ENCODE measurements at regions of chr4 and their contacts with region 1.

Region 1: GRCh38 chr4:54217642-54218495 is 11.2 kb upstream of the PDGFRA start:
- DNase-seq: peak; percentile 53 to 83 (median 65)
- ATAC-seq: peak; percentile 90
- H3K4me3 ChIP-seq: no peak overlapping the region
- H3K4me1 ChIP-seq: peaks cover 6% of the 10 kb centered on the region
- CTCF ChIP-seq: peak; percentile 79

Region 2: GRCh38 chr4:53551958-53552357 is 665.9 kb before region 1 on chr4:
- intact Hi-C with region 1: no loop called
- DNase-seq: no peak
- ATAC-seq: no peak
- H3K4me3 ChIP-seq: no peak overlapping the region
- H3K4me1 ChIP-seq: no peaks in the 10 kb centered on the region
- CTCF ChIP-seq: no peak

Region 3: DNA sequence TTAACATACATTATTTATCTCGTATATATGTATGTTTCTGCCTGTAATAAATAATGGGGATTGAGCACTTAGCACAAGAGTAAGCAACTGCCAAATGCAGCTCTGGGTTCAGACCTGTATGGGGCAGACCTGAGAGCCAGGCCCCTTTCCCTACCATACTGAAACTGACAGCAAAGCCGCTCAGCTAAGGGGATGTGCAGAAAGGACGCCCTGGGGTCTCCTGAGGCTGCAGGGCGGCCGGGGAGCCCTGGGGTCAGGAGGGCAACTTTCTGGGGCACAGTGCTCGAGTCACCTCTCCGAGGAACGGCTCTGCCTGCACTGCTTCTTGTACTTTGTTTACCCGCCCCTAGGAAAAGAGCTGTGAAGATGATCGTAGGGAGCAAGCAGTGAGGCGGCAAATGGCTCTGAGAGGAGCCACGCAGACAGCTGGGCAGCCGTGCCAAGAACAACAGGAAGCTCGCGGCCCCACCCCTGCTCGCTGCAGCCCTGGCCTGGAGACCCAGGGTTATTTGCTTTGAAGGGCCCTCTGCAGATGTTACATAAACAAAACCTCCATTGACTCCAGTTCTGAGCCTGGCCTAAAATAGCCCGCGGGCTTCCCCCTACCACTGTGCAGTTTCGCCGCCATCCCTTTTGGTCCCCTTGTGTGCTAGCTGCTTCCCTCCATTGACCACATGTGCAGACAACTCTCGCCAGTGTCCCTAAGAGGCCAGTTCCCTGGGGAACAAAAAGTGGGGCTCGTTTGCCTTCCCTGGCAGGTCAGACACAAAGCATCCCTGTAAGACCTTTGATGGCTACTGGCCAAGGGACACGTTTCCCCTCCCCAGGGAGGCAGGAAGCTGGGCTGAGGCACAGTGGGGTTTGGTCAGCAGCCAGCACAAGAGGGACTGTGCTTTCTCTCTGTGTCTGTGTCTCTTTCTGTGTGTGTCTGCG is 515.3 kb before region 1 on chr4:
- intact Hi-C with region 1: loop called in 1 of 2 experiments (anchors 10 kb)
- DNase-seq: peak; percentile 84 to 85 (median 84)
- ATAC-seq: peak; percentile 92
- H3K4me3 ChIP-seq: no peak overlapping the region
- H3K4me1 ChIP-seq: peaks cover 13% of the 10 kb centered on the region
- CTCF ChIP-seq: no peak

Region 4: DNA sequence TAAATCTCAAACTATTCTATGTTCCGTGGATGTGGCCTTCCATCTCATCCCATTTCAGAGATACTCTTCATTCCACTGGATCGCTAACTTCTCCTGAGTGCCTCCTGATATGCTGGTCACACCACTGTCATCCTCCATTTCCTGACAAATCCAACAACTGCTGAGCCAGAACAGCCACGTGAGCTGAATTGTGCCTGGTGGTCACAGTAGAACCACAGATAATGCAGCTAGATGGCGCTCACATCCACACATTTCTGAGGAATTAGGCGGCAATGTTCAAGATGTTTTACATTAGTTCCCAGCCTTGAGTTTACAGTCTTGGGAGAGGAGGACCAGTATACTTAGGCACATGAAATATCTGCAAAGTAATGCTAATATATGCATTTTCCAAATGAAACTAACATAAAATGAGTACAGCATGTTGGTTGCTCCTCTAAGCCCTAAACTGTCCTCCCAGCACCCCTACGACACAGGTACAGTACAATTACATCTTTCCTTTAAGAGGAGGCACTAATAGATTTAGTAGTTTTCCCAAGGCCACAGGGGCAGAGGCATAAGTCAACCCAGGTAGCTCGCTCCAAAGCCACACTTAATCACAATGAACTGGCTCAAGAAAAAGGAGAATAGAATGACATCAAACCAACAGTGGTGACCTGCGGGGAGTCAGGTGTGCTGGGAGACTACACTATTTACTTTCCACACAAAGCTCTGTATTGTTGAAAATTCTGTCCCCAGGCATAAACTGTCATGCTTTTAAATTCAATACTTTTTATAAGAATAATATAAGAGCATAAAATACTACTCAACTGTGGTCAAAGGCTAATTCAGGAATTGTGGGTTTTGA is 287.7 kb before region 1 on chr4:
- intact Hi-C with region 1: loop called in 1 of 2 experiments (anchors 5 kb)
- DNase-seq: peak in 2 of 3 donors; percentile 36 to 93
- ATAC-seq: peak; percentile 84
- H3K4me3 ChIP-seq: no peak overlapping the region
- H3K4me1 ChIP-seq: no peaks in the 10 kb centered on the region
- CTCF ChIP-seq: peak; percentile 17

Region 5: GRCh38 chr4:54082168-54082567 is 135.7 kb before region 1 on chr4:
- intact Hi-C with region 1: no loop called
- DNase-seq: peak in 2 of 3 donors; percentile 27 to 49
- ATAC-seq: peak; percentile 95
- H3K4me3 ChIP-seq: no peak overlapping the region
- H3K4me1 ChIP-seq: no peaks in the 10 kb centered on the region
- CTCF ChIP-seq: no peak

Region 6: DNA sequence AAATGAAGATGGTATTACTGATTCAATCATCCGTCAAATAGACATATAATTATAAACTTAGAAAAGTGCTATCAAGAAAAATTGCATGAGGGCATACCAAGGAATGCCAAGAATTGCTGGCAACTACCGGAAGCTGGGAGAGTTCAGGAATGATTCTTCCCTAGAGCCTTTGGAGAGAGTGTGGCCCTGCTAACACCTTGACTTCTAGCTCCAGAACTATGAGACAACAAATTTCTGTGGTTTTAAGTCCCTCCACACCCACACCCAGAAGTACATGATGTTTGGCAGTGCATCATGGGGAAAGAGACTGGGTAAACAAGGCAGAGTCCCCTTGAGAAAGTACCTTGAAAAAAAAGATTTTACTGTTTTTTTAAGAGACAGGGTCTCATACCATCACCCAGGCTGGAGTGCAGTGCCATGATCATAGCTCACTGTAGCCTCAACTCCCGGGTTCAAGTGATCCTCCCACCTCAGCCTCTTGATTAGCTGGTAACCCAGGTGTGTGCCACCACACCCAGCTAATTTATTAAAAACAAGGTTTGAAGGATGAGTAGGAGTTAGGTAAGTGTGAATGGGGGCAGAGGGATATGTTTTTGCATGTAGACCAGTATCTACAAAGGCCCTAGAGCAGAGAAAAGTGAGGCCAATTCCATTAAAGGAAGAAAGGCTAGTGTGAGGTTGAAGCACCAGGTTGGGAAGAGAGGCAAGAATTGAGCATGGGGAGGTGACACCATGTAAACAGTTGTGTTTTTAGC is 64.8 kb before region 1 on chr4:
- intact Hi-C with region 1: no loop called
- DNase-seq: no peak
- ATAC-seq: no peak
- H3K4me3 ChIP-seq: no peak overlapping the region
- H3K4me1 ChIP-seq: no peaks in the 10 kb centered on the region
- CTCF ChIP-seq: no peak

Measured in mucosa of descending colon (tissue), 3 donors.